CD14-positive monocyte (primary cell): ENCODE measurements at regions of chr13 and their contacts with region 1.

Region 1: DNA sequence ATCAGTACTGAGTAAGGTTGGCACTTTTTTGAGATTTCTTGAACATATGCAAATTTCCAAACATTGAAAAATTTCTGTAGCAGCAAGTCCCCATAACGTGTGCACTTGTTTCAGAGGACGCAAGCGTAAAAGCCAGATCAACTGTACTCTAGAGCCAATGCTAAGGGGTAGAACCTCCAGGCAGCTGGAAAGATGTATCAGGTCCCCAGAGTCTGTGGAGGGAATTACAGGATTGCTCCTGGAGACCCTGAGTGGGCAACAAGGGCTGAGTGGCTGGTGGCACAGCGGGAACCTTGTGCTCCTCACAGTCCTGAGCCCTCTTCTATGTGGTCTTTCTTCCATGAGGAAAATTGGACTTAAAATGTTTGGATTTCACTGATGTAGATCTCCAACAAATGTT is 53.9 kb upstream of the AMER2 start:
- DNase-seq: no peak
- H3K4me3 ChIP-seq: no peak overlapping the region
- H3K4me3 Mint-ChIP-seq: no peak overlapping the region
- H3K27ac ChIP-seq: no peak overlapping the region
- H3K27ac Mint-ChIP-seq: no peak overlapping the region
- H3K4me1 ChIP-seq: no peaks in the 10 kb centered on the region
- H3K4me1 Mint-ChIP-seq: no peaks in the 10 kb centered on the region
- H3K27me3 ChIP-seq: peaks cover 7 to 32% of the 10 kb centered on the region in 2 donors
- H3K27me3 Mint-ChIP-seq: peaks cover 21 to 41% (median 28%) of the 10 kb centered on the region in 3 donors
- CTCF ChIP-seq: no peak

Region 2: DNA sequence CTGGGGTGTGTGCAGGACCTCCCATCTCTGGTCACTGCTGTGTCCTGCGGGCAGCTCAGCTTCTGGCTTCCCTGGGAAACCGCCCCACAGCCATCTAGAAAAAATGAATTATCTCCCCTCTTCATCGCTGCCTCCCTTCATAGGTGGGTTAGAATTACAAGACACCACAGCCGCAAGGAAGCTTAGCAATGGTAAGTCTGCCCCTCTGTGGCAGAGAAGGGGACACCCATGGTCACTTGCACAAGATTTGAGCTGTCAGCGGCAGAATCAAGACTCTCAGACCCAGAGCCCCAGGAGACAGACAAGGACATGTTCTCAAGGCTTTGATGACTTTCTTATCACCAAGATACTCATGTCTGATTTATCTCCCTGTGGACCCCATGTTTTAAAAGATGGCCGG is 240.9 kb before region 1 on chr13:
- intact Hi-C with region 1: no loop called
- DNase-seq: no peak
- H3K4me3 ChIP-seq: no peak overlapping the region
- H3K4me3 Mint-ChIP-seq: no peak overlapping the region
- H3K27ac ChIP-seq: no peak overlapping the region
- H3K27ac Mint-ChIP-seq: no peak overlapping the region
- H3K4me1 ChIP-seq: peaks cover 6 to 9% of the 10 kb centered on the region in 2 donors
- H3K4me1 Mint-ChIP-seq: peaks cover 7% of the 10 kb centered on the region
- H3K27me3 ChIP-seq: peaks cover 4 to 19% of the 10 kb centered on the region in 2 donors
- H3K27me3 Mint-ChIP-seq: peaks cover 30 to 39% (median 33%) of the 10 kb centered on the region in 3 donors
- CTCF ChIP-seq: no peak

Region 3: GRCh38 chr13:25249001-25249543 is 23.1 kb after region 1 on chr13:
- intact Hi-C with region 1: no loop called
- DNase-seq: peak; percentile 33 to 61 (median 52)
- H3K4me3 ChIP-seq: no peak overlapping the region
- H3K4me3 Mint-ChIP-seq: peak overlapping the region in 1 of 2 donors; percentile 46
- H3K27ac ChIP-seq: peak overlapping the region in 1 of 2 donors; percentile 65
- H3K27ac Mint-ChIP-seq: peak overlapping the region in 6 of 7 donors; percentile 25 to 68 (median 45)
- H3K4me1 ChIP-seq: peaks cover 19 to 35% of the 10 kb centered on the region in 2 donors
- H3K4me1 Mint-ChIP-seq: peaks cover 39% of the 10 kb centered on the region
- H3K27me3 ChIP-seq: no peaks in the 10 kb centered on the region
- H3K27me3 Mint-ChIP-seq: no peaks in the 10 kb centered on the region
- CTCF ChIP-seq: peak; percentile 64

Region 4: DNA sequence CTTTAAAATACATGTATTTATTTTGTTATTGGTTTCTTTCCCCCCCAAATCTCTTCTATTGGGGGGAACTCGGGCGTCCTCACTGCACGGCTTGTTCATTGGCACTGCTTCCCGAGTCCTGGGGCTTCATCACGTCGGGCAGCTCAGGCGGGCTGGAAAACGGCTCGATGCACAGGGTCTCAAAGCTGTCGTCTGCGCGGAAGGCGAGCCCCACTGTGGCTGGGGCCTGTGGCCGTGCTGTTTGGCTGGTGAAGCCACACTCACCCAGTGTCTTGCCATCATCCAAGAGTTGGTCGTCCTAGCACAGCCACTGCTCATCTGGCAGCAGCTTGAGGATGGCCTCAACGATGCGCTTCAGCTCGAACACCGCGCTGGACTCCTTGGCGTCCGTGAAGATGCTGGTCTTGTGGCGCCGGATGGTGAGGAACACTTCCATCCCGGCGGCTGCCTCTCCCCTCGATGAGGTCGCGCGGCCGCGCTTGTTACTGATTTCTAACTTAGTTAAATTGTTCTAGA is 139.8 kb after region 1 on chr13:
- intact Hi-C with region 1: loop called in 1 of 2 experiments (anchors 10 kb)
- DNase-seq: no peak
- H3K4me3 ChIP-seq: no peak overlapping the region
- H3K4me3 Mint-ChIP-seq: no peak overlapping the region
- H3K27ac ChIP-seq: no peak overlapping the region
- H3K27ac Mint-ChIP-seq: no peak overlapping the region
- H3K4me1 ChIP-seq: no peaks in the 10 kb centered on the region
- H3K4me1 Mint-ChIP-seq: no peaks in the 10 kb centered on the region
- H3K27me3 ChIP-seq: peaks cover 8 to 28% of the 10 kb centered on the region in 2 donors
- H3K27me3 Mint-ChIP-seq: peaks cover 31 to 42% (median 34%) of the 10 kb centered on the region in 3 donors
- CTCF ChIP-seq: no peak